Ascending aorta (tissue), 2 donors: ENCODE measurements at regions of chr5 and their contacts with region 1.

Region 1: DNA sequence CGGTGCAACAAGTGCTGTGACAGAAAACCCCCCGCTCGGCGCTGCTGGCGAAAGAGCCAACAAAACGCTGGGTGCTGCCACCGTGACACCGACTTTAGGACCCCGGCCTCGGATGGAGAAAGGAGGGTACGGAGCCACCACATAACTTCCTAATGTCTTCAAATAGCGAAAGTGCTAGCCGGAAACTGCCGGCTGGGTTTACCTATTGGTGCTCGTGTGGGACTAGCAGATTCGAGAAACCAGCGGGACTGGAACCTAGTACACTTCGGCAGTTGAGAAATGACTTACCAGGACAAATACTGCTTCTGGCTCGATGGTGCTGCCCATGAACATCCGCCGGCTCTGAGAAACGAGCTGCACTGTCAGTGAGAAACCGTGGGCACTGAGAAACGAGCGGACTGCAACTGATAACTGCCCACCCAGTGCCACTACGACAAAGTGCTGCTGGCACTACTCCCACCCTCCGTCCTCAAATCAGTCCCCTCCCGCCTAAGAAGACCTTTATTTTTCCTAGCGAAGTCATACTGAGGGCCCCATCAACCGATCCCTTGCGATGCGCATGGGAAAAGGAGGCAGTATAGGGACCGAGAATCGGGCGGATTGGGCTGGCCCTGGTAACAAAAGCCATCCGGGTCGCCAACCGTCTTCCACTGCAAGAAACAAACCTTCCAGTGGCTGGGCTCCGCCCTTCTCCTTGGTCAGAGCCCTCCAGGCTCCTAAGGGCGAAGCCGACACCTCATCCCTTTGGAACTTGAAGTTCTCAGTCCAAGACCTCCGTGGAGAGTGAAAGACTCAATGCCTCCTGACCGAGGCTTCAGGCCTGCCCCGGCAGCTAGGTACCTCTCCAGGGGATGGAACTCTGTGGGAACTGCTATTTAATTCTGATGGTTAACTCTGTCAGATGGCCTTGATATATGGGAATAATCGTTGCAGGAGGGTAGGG is 27.0 kb upstream of the ANXA2R start:
- DNase-seq: peak; percentile 67 to 95
- H3K4me3 ChIP-seq: peak overlapping the region; percentile 87 to 90
- H3K27ac ChIP-seq: peak overlapping the region; percentile 99 to 100
- H3K4me1 ChIP-seq: peaks cover 0 to 26% of the 10 kb centered on the region in 2 donors
- H3K27me3 ChIP-seq: no peaks in the 10 kb centered on the region
- CTCF ChIP-seq: no peak

Region 2: GRCh38 chr5:41903892-41904799 is 1162.9 kb before region 1 on chr5 and contains the start of gene RIMOC1:
- intact Hi-C with region 1: loop called (anchors 10 kb)
- DNase-seq: peak; percentile 98 to 100
- H3K4me3 ChIP-seq: peak within 1 kb of the TSS; percentile 75 to 79
- H3K27ac ChIP-seq: peak within 1 kb of the TSS; percentile 87 to 94
- H3K4me1 ChIP-seq: peaks cover 3 to 6% of the 10 kb centered on the region in 2 donors
- H3K27me3 ChIP-seq: no peaks in the 10 kb centered on the region
- CTCF ChIP-seq: no peak
- total RNA-seq, gene RIMOC1: 11.1 TPM

Region 3: DNA sequence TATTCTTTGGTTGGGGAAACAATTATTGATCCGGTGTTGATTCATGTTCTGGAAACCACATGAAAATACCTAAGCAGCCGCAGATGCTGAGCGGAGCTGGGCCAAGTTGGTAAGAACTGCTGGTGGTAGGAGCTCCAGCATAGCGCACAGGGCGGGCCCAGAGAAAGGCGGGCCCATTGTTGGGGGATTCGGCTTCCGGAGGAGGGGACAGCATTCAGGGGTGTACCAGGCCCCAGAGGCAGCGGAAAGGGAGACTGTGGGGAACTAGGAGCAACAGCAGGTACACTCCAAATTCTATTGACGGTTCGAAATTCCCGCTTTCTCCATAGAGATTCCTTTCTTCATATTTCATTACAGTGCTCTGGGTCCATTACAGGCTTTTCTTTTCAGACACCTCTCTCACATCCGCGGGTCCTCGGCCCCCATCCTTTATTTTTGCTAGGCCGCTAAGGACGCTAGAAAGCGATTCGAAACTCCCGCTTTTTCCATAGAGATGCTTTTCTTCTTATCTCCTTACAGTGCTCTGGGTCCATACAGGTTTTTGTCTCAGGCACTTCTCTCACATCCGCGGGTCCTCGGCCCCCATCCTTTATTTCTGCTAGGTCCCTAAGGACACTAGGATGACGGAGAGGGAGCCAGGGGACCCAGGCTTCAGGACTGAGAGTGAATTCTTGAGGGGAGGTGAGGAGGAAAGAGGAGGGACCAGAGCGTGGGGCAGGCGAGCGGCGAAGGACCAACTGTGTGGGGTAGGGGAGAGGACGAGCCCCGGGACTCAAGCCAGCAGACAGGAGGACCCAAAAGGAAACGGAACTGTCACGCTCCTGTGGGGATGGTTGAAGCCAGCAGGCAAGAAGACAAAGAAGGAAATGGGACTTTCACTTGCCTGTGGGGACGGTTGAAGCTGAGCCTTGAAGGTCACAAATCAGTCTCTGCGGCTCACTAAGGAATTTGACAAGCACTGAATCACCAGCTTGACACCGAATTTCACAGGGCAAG is 310.2 kb before region 1 on chr5 and contains the start of gene CCDC152:
- intact Hi-C with region 1: no loop called
- DNase-seq: peak in 1 of 2 donors; percentile 54
- H3K4me3 ChIP-seq: peak within 1 kb of the TSS; percentile 10 to 66
- H3K27ac ChIP-seq: no peak within 1 kb of the TSS
- H3K4me1 ChIP-seq: no peaks in the 10 kb centered on the region
- H3K27me3 ChIP-seq: no peaks in the 10 kb centered on the region
- CTCF ChIP-seq: no peak
- total RNA-seq, gene CCDC152: not detected

Region 4: DNA sequence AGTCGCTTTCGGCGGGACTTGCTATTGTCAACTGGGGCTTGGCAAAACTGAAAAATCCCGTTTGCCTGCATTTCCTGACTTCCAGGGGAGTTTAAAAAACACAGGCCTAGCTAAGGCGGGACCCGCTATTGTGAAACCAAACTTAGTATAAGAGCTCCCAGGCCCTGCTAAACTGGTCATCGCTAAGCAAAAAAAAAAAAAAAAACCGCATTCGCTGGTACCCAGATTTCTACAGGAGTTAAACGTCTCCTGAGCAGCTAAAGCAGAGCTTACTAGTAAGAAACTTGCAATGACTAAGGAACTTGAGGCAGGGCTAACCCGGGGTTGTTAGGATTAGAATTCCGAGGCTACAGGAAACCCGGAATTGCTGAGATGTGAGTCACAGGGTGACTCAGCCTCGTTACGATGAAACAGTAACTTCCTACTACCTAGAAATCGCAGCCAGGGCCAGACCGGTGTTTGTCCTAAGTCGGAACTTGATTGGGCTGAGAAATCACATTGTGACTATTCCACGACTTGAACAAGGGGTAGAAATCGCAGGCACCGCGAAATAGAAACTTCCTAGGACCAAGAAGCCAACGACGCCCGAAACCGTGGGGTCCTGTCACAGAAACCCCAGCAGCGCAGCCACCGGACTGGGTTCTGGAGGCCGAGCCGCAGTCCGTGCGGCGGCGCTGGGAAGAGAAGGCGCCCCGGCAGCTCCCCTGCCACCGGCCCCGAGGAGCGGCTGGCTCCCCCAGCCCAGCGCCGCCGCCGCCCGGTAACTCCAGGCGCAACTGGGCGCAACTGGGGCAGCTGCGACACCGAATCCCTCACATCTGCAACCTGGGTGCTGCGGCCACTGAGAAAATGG is 116.4 kb before region 1 on chr5:
- intact Hi-C with region 1: loop called (anchors 2 kb)
- DNase-seq: peak; percentile 53 to 95
- H3K4me3 ChIP-seq: peak overlapping the region; percentile 61 to 88
- H3K27ac ChIP-seq: peak overlapping the region; percentile 96 to 97
- H3K4me1 ChIP-seq: peaks cover 7% of the 10 kb centered on the region in 2 donors
- H3K27me3 ChIP-seq: no peaks in the 10 kb centered on the region
- CTCF ChIP-seq: no peak

Region 5: DNA sequence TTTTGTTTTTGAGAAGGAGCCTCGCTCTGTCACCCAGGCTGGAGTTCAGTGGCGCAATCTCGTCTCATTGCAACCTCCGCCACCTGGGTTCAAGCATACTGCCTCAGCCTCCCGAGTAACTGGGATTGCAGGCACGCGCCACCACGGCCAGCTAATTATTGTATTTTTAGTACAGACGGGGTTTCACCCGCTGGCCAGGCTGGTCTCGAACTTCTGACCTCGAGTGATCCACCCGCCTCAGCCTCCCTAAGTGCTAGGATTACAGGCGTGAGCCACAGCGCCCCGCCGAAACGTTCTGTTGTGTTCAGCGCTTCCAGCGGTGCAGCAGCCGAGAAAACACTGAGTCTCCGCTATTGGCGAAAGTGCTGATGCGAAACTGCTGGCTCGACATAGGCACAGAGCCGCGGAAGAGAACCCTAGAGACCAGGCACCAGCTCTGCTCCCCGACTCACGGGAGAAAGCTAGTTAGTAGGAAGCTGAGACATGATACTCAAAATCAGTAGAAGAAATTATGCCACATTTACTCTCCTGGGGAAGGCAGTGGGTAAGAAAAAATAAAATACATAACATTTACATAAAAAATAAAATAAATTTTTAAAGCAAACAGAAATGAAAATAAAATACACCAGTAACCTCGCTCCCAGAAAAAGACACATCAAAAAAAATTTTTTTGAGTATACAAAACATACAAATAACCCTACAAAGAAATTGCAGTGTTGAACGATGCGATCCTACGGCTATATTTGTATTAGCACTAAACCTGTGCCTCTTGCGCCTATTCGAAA is 58.5 kb before region 1 on chr5:
- intact Hi-C with region 1: loop called (anchors 2 kb)
- DNase-seq: peak in 1 of 2 donors; percentile 86
- H3K4me3 ChIP-seq: peak overlapping the region; percentile 50 to 66
- H3K27ac ChIP-seq: peak overlapping the region; percentile 81 to 83
- H3K4me1 ChIP-seq: peaks cover 0 to 4% of the 10 kb centered on the region in 2 donors
- H3K27me3 ChIP-seq: no peaks in the 10 kb centered on the region
- CTCF ChIP-seq: no peak

Region 6: GRCh38 chr5:43040287-43041098 is 26.6 kb before region 1 on chr5 and contains the start of gene ANXA2R:
- intact Hi-C with region 1: loop called (anchors 1 kb)
- DNase-seq: peak in 1 of 2 donors; percentile 93
- H3K4me3 ChIP-seq: peak within 1 kb of the TSS; percentile 64 to 91
- H3K27ac ChIP-seq: peak within 1 kb of the TSS; percentile 96 to 99
- H3K4me1 ChIP-seq: peaks cover 0 to 2% of the 10 kb centered on the region in 2 donors
- H3K27me3 ChIP-seq: no peaks in the 10 kb centered on the region
- CTCF ChIP-seq: peak; percentile 58 to 74 (median 66)
- total RNA-seq, gene ANXA2R: 5.1 TPM

Region 7: DNA sequence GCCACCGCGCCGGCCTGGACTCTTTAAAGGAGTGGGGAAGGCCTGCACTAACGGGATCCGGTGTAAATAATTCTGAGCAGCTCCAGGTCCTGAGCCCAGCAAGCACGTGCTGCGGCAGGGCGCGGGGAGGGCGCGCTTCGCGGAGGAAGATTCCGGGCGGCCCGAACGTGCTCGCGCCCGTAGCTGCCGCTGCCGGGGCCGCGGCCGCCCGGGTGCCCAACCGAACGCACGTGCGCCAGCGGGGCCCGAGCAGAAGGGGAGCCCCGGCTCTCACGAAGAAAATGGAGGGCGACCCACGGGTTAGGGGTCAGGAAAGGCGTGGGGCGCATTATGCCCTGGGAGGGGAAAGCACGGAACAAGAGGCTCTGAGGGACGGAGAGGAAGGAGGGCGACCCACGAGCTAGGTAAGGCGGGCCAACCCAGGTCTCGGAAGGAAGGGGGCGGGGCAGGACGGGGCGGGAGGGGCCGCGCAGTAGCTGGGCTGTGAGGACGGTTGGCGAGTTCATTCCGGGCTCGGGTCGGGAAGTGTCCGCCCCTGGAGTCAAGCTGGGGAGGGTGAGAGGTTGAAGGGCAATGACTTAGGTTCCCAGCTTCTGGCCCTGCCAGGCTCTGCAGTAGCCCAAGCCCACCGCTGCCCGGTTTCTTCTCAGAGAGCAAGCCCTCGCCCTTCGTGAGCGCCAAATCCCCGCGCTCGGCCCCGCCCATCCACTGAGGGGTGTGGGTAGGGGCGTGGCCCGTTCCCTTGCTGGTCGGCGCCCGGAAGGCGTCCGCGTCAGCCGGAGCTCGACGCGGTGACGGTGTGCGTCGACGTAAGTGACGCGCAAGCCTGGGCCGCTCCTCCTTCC is 53.9 kb after region 1 on chr5 and contains the start of gene ZNF131:
- intact Hi-C with region 1: loop called (anchors 1 kb)
- DNase-seq: peak; percentile 84 to 98
- H3K4me3 ChIP-seq: peak within 1 kb of the TSS; percentile 85 to 87
- H3K27ac ChIP-seq: peak within 1 kb of the TSS; percentile 90 to 99
- H3K4me1 ChIP-seq: peaks cover 0 to 20% of the 10 kb centered on the region in 2 donors
- H3K27me3 ChIP-seq: no peaks in the 10 kb centered on the region
- CTCF ChIP-seq: peak in 1 of 3 experiments; percentile 19
- total RNA-seq, gene ZNF131: 61.2 TPM

Region 8: DNA sequence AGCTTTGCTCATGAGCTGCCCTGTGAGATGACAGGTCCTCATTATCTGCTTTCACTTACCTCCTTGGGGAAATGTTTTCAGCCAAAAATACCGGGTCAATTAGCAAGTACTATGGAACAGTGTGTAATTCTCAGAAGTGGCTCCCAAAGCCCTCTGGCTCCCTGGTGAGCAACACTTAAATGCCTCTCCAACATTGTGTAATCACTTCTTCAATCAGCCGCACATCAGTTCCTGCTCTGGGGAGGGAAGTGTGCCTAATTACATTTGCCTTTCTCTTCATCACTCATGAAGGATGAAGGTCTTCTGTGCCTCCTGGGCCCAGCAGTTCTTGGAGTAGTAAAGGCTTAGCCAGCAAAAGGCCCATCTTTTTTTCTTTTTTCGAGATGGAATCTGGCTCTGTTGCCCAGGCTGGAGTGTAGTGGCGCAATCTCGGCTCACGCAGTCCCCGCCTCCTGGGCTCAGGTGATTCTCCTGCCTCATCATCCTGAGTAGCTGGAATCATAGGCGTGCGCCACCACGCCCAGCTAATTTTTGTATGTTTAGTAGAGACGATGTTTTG is 148.1 kb after region 1 on chr5:
- intact Hi-C with region 1: no loop called
- DNase-seq: no peak
- H3K4me3 ChIP-seq: no peak overlapping the region
- H3K27ac ChIP-seq: no peak overlapping the region
- H3K4me1 ChIP-seq: no peaks in the 10 kb centered on the region
- H3K27me3 ChIP-seq: no peaks in the 10 kb centered on the region
- CTCF ChIP-seq: no peak

Region 9: GRCh38 chr5:43231977-43232376 is 164.9 kb after region 1 on chr5:
- intact Hi-C with region 1: no loop called
- DNase-seq: no peak
- H3K4me3 ChIP-seq: no peak overlapping the region
- H3K27ac ChIP-seq: no peak overlapping the region
- H3K4me1 ChIP-seq: no peaks in the 10 kb centered on the region
- H3K27me3 ChIP-seq: no peaks in the 10 kb centered on the region
- CTCF ChIP-seq: no peak

Region 10: GRCh38 chr5:43484106-43484849 is 417.2 kb after region 1 on chr5:
- intact Hi-C with region 1: loop called (anchors 5 kb)
- DNase-seq: peak; percentile 14 to 85
- H3K4me3 ChIP-seq: peak overlapping the region; percentile 69 to 97
- H3K27ac ChIP-seq: peak overlapping the region; percentile 98 to 99
- H3K4me1 ChIP-seq: peaks cover 0 to 7% of the 10 kb centered on the region in 2 donors
- H3K27me3 ChIP-seq: no peaks in the 10 kb centered on the region
- CTCF ChIP-seq: peak; percentile 54 to 79 (median 67)